Mammary epithelial cell (primary cell): ENCODE measurements at regions of chr4 and their contacts with region 1.

Region 1: GRCh38 chr4:154164931-154165839 is 326.4 kb downstream of the DCHS2 start:
- DNase-seq: peak; percentile 97
- H3K4me3 ChIP-seq: peak overlapping the region in 2 of 3 experiments; percentile 10 to 17
- H3K27ac ChIP-seq: peak overlapping the region; percentile 83
- H3K4me1 ChIP-seq: peaks cover 20% of the 10 kb centered on the region
- H3K27me3 ChIP-seq: no peaks in the 10 kb centered on the region
- CTCF ChIP-seq: no peak

Region 2: GRCh38 chr4:154004507-154005170 is 160.5 kb before region 1 on chr4:
- CTCF ChIA-PET with region 1: no interaction called
- dilution Hi-C with region 1: no loop called
- in situ Hi-C with region 1: no loop called
- intact Hi-C with region 1: loop called (anchors 5 kb)
- DNase-seq: no peak
- H3K4me3 ChIP-seq: no peak overlapping the region
- H3K27ac ChIP-seq: peak overlapping the region; percentile 53
- H3K4me1 ChIP-seq: peaks cover 23% of the 10 kb centered on the region
- H3K27me3 ChIP-seq: no peaks in the 10 kb centered on the region
- CTCF ChIP-seq: no peak

Region 3: GRCh38 chr4:154084864-154085263 is 80.3 kb before region 1 on chr4:
- CTCF ChIA-PET with region 1: no interaction called
- dilution Hi-C with region 1: no loop called
- in situ Hi-C with region 1: no loop called
- intact Hi-C with region 1: loop called (anchors 5 kb)
- DNase-seq: peak; percentile 78
- H3K4me3 ChIP-seq: no peak overlapping the region
- H3K27ac ChIP-seq: no peak overlapping the region
- H3K4me1 ChIP-seq: peaks cover 23% of the 10 kb centered on the region
- H3K27me3 ChIP-seq: no peaks in the 10 kb centered on the region
- CTCF ChIP-seq: no peak

Region 4: GRCh38 chr4:154124539-154125255 is 40.5 kb before region 1 on chr4:
- CTCF ChIA-PET with region 1: no interaction called
- dilution Hi-C with region 1: no loop called
- in situ Hi-C with region 1: no loop called
- intact Hi-C with region 1: loop called (anchors 2 kb)
- DNase-seq: peak; percentile 96
- H3K4me3 ChIP-seq: no peak overlapping the region
- H3K27ac ChIP-seq: peak overlapping the region; percentile 51
- H3K4me1 ChIP-seq: peaks cover 28% of the 10 kb centered on the region
- H3K27me3 ChIP-seq: no peaks in the 10 kb centered on the region
- CTCF ChIP-seq: no peak

Region 5: GRCh38 chr4:154132406-154132805 is 32.8 kb before region 1 on chr4:
- CTCF ChIA-PET with region 1: no interaction called
- dilution Hi-C with region 1: no loop called
- in situ Hi-C with region 1: no loop called
- intact Hi-C with region 1: loop called (anchors 2 kb)
- DNase-seq: no peak
- H3K4me3 ChIP-seq: no peak overlapping the region
- H3K27ac ChIP-seq: peak overlapping the region; percentile 49
- H3K4me1 ChIP-seq: peaks cover 17% of the 10 kb centered on the region
- H3K27me3 ChIP-seq: no peaks in the 10 kb centered on the region
- CTCF ChIP-seq: no peak

Region 6: GRCh38 chr4:154189346-154189745 is 24.2 kb after region 1 on chr4:
- CTCF ChIA-PET with region 1: interaction called, 10 read pairs
- dilution Hi-C with region 1: no loop called
- in situ Hi-C with region 1: no loop called
- intact Hi-C with region 1: no loop called
- DNase-seq: peak; percentile 14
- H3K4me3 ChIP-seq: no peak overlapping the region
- H3K27ac ChIP-seq: no peak overlapping the region
- H3K4me1 ChIP-seq: no peaks in the 10 kb centered on the region
- H3K27me3 ChIP-seq: peaks cover 2% of the 10 kb centered on the region
- CTCF ChIP-seq: no peak